ENCODE measurements at regions of chr11 and their contacts with region 1.

Region 1: GRCh38 chr11:111878849-111879636 is at the starts of genes CFAP68 and FDXACB1:
- DNase-seq: peak; percentile 93
- ATAC-seq: peak; percentile 94
- H3K4me3 ChIP-seq: peak within 1 kb of the TSS; percentile 94
- H3K27ac ChIP-seq: peak within 1 kb of the TSS; percentile 85
- H3K4me1 ChIP-seq: no peaks in the 10 kb centered on the region
- H3K27me3 ChIP-seq: no peaks in the 10 kb centered on the region
- CTCF ChIP-seq: peak; percentile 96 to 97 (median 97); a peak in 5 of 6 replicates
- EP300 ChIP-seq: peak in 1 of 2 experiments; percentile 63; a peak in 2 of 4 replicates
- POLR2A ChIP-seq: peak; percentile 85
- RAD21 ChIP-seq: peak; percentile 59
- polyA plus RNA-seq, gene CFAP68: 72.7 to 83.7 TPM
- polyA plus RNA-seq, gene FDXACB1: 8.6 to 13.3 TPM

Region 2: GRCh38 chr11:111926505-111927391 is 47.7 kb after region 1 on chr11:
- CTCF ChIA-PET with region 1: interaction called, 5 read pairs
- POLR2A ChIA-PET with region 1: interaction called, 13 read pairs
- RAD21 ChIA-PET with region 1: interaction called, 8 read pairs
- SMC1A ChIA-PET with region 1: interaction called, 4 read pairs
- in situ Hi-C with region 1: no loop called
- intact Hi-C with region 1: loop called (anchors 2 kb)
- DNase-seq: peak; percentile 84
- ATAC-seq: peak; percentile 98
- H3K4me3 ChIP-seq: peak overlapping the region; percentile 66
- H3K27ac ChIP-seq: peak overlapping the region; percentile 66
- H3K4me1 ChIP-seq: peaks cover 10% of the 10 kb centered on the region
- H3K27me3 ChIP-seq: no peaks in the 10 kb centered on the region; a peak in 1 of 4 replicates
- CTCF ChIP-seq: no peak
- EP300 ChIP-seq: no peak
- POLR2A ChIP-seq: peak; percentile 79
- RAD21 ChIP-seq: no peak

Region 3: GRCh38 chr11:111944651-111945051 is 65.6 kb after region 1 on chr11:
- CTCF ChIA-PET with region 1: interaction called, 3 read pairs
- POLR2A ChIA-PET with region 1: no interaction called
- RAD21 ChIA-PET with region 1: no interaction called
- SMC1A ChIA-PET with region 1: no interaction called
- in situ Hi-C with region 1: loop called (anchors 10 kb)
- intact Hi-C with region 1: no loop called
- DNase-seq: no peak
- ATAC-seq: no peak
- H3K4me3 ChIP-seq: no peak overlapping the region
- H3K27ac ChIP-seq: no peak overlapping the region
- H3K4me1 ChIP-seq: peaks cover 10% of the 10 kb centered on the region
- H3K27me3 ChIP-seq: no peaks in the 10 kb centered on the region
- CTCF ChIP-seq: no peak
- EP300 ChIP-seq: no peak
- POLR2A ChIP-seq: no peak
- RAD21 ChIP-seq: no peak